MCF 10A (cell line): ENCODE measurements at regions of chr18 and their contacts with region 1.

Region 1: DNA sequence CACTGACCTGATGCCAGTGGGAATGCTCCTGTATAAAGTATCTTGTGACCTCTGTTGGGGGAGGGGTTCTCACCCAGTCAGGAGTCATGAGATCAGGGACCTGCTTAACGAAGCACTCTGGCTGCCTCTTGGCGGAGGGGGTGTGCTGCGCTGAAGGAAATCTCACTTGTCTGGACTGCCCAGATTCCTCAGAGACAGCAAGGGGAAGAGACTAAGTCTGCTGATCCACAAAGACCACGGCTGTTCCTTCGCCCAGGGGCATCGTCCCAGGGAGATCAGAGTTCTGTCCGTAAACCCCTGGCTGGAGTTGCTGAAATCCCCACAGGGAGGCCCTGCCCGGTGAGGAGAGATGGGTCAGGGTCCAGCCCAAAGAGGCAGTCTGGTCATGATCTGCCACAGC is 168.4 kb downstream of the CCBE1 start:
- DNase-seq: no peak
- H3K4me3 Mint-ChIP-seq: no peak overlapping the region
- H3K27ac Mint-ChIP-seq: no peak overlapping the region
- H3K4me1 Mint-ChIP-seq: no peaks in the 10 kb centered on the region
- H3K27me3 Mint-ChIP-seq: no peaks in the 10 kb centered on the region
- CTCF ChIP-seq: no peak

Region 2: DNA sequence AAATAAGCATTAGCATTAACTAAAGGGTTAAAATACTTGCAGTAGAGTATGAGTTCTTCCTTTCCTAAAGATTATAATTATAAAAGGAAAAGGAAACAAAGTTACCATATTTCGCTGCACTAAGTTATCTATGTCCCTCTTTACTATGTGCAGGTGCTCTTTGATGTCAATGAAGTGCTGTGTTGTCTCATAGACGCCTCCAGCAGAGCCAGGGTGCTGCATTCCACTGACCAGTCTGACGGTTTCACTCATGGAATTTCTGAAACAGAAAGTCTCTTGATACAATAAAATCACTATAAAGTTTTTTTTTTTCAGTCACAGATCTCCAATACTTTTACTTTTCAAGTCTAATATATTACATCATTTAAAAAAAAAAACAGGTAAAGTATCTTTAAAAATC is 195.9 kb before region 1 on chr18:
- CTCF ChIA-PET with region 1: no interaction called
- POLR2A ChIA-PET with region 1: no interaction called
- intact Hi-C with region 1: no loop called
- DNase-seq: no peak
- H3K4me3 Mint-ChIP-seq: no peak overlapping the region
- H3K27ac Mint-ChIP-seq: no peak overlapping the region
- H3K4me1 Mint-ChIP-seq: no peaks in the 10 kb centered on the region
- H3K27me3 Mint-ChIP-seq: no peaks in the 10 kb centered on the region
- CTCF ChIP-seq: no peak

Region 3: DNA sequence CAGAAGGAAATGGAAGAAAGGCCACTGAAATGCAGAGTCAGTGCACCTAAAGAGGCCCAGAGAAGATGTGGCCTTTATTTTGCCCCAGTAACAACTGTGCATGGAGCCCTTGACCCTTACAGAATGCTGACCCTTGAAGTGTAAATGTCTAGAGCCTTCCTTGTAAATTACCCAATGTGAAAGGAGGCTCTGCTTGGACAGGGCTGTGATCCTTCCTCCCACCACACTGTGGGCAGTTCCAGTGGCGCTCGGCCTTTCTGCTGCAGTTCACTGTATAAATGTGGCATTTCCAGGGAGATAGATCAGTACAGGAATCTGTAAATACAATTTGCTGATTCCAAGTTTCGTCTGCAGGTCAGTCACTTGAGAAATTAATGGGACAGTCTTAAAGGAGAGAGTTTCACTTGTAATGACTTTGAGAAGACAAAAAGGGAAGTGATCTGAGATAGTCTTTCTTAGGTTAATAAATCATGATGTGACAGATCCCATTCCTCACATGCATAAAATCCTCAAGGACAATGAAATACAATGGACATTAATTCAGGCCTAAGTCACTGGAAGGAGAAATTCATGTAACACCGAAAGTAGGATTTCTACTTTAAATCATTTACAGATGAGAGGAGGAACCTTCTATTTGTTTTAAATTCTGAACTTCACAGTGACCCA is 36.0 kb before region 1 on chr18:
- CTCF ChIA-PET with region 1: no interaction called
- POLR2A ChIA-PET with region 1: no interaction called
- intact Hi-C with region 1: no loop called
- DNase-seq: no peak
- H3K4me3 Mint-ChIP-seq: no peak overlapping the region
- H3K27ac Mint-ChIP-seq: no peak overlapping the region
- H3K4me1 Mint-ChIP-seq: no peaks in the 10 kb centered on the region
- H3K27me3 Mint-ChIP-seq: no peaks in the 10 kb centered on the region
- CTCF ChIP-seq: no peak

Region 4: GRCh38 chr18:59514203-59514602 is 14.7 kb before region 1 on chr18:
- CTCF ChIA-PET with region 1: interaction called, 11 read pairs
- POLR2A ChIA-PET with region 1: no interaction called
- intact Hi-C with region 1: no loop called
- DNase-seq: no peak
- H3K4me3 Mint-ChIP-seq: no peak overlapping the region
- H3K27ac Mint-ChIP-seq: peak overlapping the region; percentile 42
- H3K4me1 Mint-ChIP-seq: peaks cover 21% of the 10 kb centered on the region
- H3K27me3 Mint-ChIP-seq: no peaks in the 10 kb centered on the region
- CTCF ChIP-seq: no peak